ENCODE measurements at regions of chr14 and their contacts with region 1.

Region 1: DNA sequence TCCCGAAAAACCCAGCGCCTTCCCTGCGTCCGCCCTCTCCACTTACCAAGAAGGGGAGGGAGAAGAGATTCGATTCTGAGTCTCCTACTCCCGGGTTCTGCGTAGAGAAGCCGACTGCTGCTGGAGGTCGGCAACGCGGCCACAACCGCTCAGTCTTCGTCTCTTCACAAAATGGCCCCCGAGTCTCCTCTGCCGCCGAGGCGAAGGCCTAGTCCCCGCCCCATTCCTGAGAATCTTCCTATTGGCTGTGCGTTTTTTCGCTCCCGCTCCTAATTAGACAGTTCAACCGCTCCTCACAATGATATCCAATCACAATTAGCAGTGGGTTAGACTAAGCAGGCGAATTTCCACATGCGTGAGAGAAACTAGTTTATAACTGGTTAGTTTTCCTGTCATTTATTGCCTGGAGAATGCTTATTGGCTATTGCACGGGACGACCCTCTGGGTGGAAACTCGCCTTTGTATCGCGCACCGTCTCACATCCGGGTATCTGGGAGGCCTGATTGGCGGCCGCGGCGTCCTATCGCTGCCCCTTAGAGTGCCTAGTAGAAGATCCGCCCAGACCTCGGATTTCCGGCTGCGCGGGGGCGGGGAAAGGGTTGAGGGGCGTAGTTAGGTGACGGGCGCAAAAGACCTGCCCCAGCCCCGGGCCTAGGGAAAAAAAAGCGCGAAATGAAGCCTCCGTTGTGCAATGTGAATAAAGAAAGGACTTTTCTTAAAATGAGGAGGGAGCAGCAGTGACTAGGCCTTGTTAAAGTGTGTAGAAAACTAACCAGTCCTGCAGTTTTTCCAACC is at the start of gene HNRNPC:
- DNase-seq: peak; percentile 100
- ATAC-seq: peak; percentile 90
- H3K4me3 Mint-ChIP-seq: peak within 1 kb of the TSS; percentile 94
- H3K27ac Mint-ChIP-seq: peak within 1 kb of the TSS; percentile 100
- H3K4me1 Mint-ChIP-seq: peaks cover 24% of the 10 kb centered on the region
- H3K27me3 Mint-ChIP-seq: no peaks in the 10 kb centered on the region
- CTCF ChIP-seq: no peak
- total RNA-seq, gene HNRNPC: 1,078 to 1,115 TPM

Region 2: DNA sequence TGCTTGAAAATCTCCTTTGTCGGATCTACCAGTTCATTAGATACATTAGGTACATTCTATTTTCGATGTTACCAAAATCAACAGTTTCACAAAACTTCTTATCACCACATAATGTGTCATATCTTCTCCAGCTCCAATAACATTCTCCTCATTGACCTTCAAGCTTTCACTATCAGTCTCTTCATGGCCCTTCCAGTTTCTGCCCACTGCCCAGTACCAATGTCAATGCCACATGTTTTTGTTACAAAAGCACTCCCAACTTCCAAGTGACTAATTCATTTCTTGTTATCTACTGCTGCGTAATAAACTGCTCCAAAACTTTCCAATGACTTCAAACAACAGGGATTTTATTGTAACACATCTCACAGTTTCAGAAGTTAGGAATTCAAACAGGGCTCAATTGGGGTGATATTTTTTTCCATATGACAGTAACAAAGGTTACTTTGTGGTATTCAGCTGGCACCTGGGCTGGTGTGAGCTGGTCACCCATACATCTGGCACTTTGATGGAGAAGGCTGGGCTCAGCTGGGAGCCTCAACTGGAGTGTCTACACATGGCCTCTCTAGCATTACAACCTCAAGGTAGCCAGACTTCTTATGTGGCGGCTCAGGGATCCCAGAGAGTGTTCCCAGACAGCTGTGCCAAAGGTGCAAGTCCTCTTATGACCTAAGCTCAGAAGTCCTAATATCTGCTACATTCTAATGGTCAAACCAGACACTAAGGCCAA is 119.6 kb before region 1 on chr14:
- CTCF ChIA-PET with region 1: no interaction called
- POLR2A ChIA-PET with region 1: no interaction called
- intact Hi-C with region 1: no loop called
- DNase-seq: no peak
- ATAC-seq: no peak
- H3K4me3 Mint-ChIP-seq: no peak overlapping the region
- H3K27ac Mint-ChIP-seq: no peak overlapping the region
- H3K4me1 Mint-ChIP-seq: no peaks in the 10 kb centered on the region
- H3K27me3 Mint-ChIP-seq: no peaks in the 10 kb centered on the region
- CTCF ChIP-seq: no peak

Region 3: DNA sequence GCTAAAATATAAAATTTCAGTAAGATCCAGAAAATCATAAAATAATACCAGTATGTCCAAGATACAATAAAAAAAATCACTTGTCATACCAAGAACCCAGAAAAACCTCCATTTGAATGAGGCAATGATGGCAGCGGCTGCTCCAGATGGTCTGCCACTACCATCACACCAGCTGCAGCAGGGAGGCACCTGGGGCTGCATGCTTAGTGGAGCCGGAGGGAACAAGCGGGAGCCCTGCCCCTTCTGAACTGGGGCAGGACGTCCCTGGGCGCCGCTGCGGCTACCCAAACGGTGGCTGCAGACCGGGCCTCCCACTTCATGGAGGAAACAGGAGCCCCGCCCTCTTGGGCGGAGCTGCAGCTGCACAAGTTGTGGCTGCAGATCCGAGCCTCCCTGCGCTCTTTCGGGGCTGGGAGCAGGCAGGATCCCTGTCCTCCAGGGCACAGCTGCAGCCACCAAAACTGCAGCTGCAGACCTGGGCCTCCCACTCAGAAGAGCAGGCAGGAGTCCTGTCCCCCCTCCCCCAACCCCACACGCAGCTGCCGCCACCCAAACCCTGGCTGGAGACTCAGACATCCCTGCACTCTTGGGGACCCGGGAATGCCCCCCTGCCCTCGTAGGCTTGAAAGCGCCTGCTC is 77.5 kb before region 1 on chr14:
- CTCF ChIA-PET with region 1: no interaction called
- POLR2A ChIA-PET with region 1: no interaction called
- intact Hi-C with region 1: no loop called
- DNase-seq: peak; percentile 85
- ATAC-seq: peak; percentile 98
- H3K4me3 Mint-ChIP-seq: peak overlapping the region; percentile 66
- H3K27ac Mint-ChIP-seq: peak overlapping the region; percentile 55
- H3K4me1 Mint-ChIP-seq: peaks cover 3% of the 10 kb centered on the region
- H3K27me3 Mint-ChIP-seq: no peaks in the 10 kb centered on the region
- CTCF ChIP-seq: no peak

Region 4: DNA sequence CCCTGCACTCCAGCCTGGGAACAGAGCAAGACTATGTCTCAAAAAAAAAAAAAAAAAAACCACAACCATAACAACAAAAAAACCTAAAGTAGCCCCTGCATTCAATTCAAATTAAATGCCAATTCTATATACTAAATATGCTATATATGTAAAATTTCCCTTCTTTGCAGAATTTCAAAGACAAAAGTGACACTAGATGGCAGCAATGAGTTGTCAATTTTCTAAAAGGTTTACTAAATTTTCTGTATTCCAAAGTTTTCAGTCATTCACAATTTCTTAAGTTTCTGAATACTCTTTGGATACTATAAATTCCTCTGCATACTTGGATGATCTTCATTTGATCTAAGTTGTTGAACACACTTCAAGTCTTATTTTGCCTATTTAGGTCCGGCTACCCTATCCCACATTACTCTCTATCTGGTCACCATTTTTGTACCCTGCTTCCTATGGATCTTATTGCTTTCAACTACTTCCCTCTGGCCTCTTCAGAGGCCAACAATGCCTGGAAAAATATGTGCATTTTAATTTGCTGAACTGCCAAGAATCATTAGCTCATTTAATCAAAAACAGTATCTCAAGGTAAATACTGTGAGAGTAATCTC is 28.1 kb before region 1 on chr14:
- CTCF ChIA-PET with region 1: interaction called, 9 read pairs
- POLR2A ChIA-PET with region 1: interaction called, 27 read pairs
- intact Hi-C with region 1: no loop called
- DNase-seq: no peak
- ATAC-seq: no peak
- H3K4me3 Mint-ChIP-seq: no peak overlapping the region
- H3K27ac Mint-ChIP-seq: peak overlapping the region; percentile 79
- H3K4me1 Mint-ChIP-seq: peaks cover 76% of the 10 kb centered on the region
- H3K27me3 Mint-ChIP-seq: no peaks in the 10 kb centered on the region
- CTCF ChIP-seq: peak; percentile 62

Region 5: GRCh38 chr14:21257394-21257909 is 12.0 kb before region 1 on chr14:
- CTCF ChIA-PET with region 1: interaction called, 15 read pairs
- POLR2A ChIA-PET with region 1: interaction called, 102 read pairs
- intact Hi-C with region 1: no loop called
- DNase-seq: no peak
- ATAC-seq: no peak
- H3K4me3 Mint-ChIP-seq: peak overlapping the region; percentile 51
- H3K27ac Mint-ChIP-seq: peak overlapping the region; percentile 75
- H3K4me1 Mint-ChIP-seq: peaks cover 65% of the 10 kb centered on the region
- H3K27me3 Mint-ChIP-seq: no peaks in the 10 kb centered on the region
- CTCF ChIP-seq: no peak

Region 6: GRCh38 chr14:21308479-21309237 is 39.2 kb after region 1 on chr14:
- CTCF ChIA-PET with region 1: interaction called, 3 read pairs
- POLR2A ChIA-PET with region 1: interaction called, 10 read pairs
- intact Hi-C with region 1: loop called (anchors 5 kb)
- DNase-seq: peak; percentile 91
- ATAC-seq: peak; percentile 93
- H3K4me3 Mint-ChIP-seq: peak overlapping the region; percentile 68
- H3K27ac Mint-ChIP-seq: peak overlapping the region; percentile 81
- H3K4me1 Mint-ChIP-seq: peaks cover 24% of the 10 kb centered on the region
- H3K27me3 Mint-ChIP-seq: no peaks in the 10 kb centered on the region
- CTCF ChIP-seq: no peak

Region 7: DNA sequence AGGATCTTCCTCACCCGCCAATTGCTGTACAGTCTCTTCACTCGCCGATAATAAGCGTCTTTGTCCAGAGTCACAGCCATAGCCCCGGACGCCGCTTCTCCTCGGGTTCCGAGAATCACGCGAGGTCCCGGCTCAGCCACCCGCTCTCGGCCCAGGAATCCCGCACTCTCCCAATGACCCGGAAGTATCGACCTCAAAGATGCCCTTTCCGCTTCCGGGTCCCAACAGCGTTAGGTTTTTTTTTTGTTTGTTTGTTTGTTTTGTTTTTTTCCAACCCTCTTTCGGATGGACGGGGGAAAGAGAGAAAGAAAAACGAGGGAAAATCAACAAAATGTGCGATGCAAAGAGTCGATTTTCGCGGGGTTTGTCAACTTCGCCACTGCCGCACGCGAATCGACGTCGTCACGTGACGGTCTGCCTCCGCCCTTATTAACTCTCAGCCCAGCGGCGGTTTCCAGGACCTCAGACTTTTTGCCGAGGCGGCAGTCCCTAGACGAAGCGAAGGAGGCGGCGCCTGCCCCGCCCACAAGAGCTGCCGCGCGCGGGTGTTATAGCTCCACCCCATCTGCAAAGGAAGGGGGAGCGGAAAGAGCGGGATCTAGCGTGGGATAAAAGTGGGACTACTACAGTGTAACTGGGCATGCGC is 114.5 kb after region 1 on chr14 and contains the start of gene SUPT16H:
- CTCF ChIA-PET with region 1: interaction called, 3 read pairs
- POLR2A ChIA-PET with region 1: interaction called, 50 read pairs
- intact Hi-C with region 1: loop called (anchors 2 kb)
- DNase-seq: peak; percentile 98
- ATAC-seq: peak; percentile 90
- H3K4me3 Mint-ChIP-seq: peak within 1 kb of the TSS; percentile 86
- H3K27ac Mint-ChIP-seq: peak within 1 kb of the TSS; percentile 99
- H3K4me1 Mint-ChIP-seq: peaks cover 34% of the 10 kb centered on the region
- H3K27me3 Mint-ChIP-seq: no peaks in the 10 kb centered on the region
- CTCF ChIP-seq: no peak
- total RNA-seq, gene SUPT16H: 171 to 173 TPM

Region 8: GRCh38 chr14:21502926-21503325 is 233.5 kb after region 1 on chr14:
- CTCF ChIA-PET with region 1: no interaction called
- POLR2A ChIA-PET with region 1: no interaction called
- intact Hi-C with region 1: no loop called
- DNase-seq: no peak
- ATAC-seq: no peak
- H3K4me3 Mint-ChIP-seq: no peak overlapping the region
- H3K27ac Mint-ChIP-seq: peak overlapping the region; percentile 13
- H3K4me1 Mint-ChIP-seq: peaks cover 38% of the 10 kb centered on the region
- H3K27me3 Mint-ChIP-seq: no peaks in the 10 kb centered on the region
- CTCF ChIP-seq: no peak

Region 9: DNA sequence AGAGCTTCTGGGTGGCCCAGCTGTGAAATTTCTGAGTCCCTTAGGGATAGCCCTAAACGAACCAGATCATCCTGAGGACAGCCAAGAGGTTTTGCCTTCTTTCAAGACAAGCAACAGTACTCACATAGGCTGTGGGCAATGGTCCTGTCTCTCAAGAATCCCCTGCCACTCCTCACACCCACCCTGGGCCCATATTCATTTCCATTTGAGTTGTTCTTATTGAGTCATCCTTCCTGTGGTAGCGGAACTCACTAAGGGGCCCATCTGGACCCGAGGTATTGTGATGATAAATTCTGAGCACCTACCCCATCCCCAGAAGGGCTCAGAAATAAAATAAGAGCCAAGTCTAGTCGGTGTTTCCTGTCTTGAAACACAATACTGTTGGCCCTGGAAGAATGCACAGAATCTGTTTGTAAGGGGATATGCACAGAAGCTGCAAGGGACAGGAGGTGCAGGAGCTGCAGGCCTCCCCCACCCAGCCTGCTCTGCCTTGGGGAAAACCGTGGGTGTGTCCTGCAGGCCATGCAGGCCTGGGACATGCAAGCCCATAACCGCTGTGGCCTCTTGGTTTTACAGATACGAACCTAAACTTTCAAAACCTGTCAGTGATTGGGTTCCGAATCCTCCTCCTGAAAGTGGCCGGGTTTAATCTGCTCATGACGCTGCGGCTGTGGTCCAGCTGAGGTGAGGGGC is 1280.7 kb after region 1 on chr14:
- CTCF ChIA-PET with region 1: no interaction called
- POLR2A ChIA-PET with region 1: no interaction called
- intact Hi-C with region 1: loop called (anchors 10 kb)
- DNase-seq: peak; percentile 90
- ATAC-seq: peak; percentile 57
- H3K4me3 Mint-ChIP-seq: peak overlapping the region; percentile 79
- H3K27ac Mint-ChIP-seq: peak overlapping the region; percentile 94
- H3K4me1 Mint-ChIP-seq: peaks cover 92% of the 10 kb centered on the region
- H3K27me3 Mint-ChIP-seq: no peaks in the 10 kb centered on the region
- CTCF ChIP-seq: no peak

Measured in activated CD8-positive, alpha-beta T cell treated with anti-CD3 and anti-CD28 coated beads for 36 hours (primary cell).